Activated B cell treated with CpG ODN at 0.5 μM for 24 hours (primary cell): ENCODE measurements at regions of chr3 and their contacts with region 1.

Region 1: DNA sequence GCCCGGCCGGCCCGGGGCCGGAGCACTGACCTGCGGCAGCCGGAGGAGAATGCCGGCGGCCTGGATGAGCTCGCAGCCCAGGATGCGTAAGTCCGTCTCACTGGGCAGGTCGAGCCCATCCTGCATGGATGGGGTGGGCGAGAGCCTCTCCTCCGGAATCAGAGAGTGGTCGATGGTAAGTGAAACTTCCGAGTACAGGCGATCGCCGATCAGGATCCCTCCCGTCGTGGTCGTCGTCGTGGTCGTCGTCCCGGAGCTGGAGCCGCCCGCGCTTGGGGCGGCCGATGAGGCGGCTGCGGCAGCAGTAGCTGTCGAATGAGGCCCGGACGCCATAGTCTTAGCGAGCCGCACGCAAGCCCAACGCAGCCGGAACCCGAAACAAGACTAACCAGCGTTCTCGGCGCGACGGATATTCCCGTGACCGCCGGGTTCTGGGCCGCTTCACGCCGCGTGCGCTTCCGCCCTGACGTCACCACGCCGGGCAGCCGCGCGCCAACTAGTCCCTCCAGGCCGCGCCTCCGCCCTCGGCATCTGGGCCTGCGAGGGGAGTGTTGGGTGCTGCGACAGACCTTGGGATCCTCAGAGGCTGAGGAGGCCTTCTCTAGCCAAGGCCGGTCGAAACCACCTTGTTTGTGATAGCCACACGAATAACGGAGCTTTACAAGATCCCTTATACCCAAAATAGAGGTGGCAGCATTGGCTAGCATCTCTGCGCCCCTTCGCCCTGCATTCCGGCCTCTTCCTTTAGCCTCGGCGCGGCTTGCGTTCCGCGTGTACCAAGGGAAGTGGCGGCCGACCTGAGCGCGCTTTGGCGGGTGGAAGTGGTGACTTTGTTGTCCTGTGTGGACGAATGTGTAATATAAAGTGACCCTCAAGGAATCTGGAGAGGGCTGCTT is at the start of gene CCNL1:
- DNase-seq: peak; percentile 96
- ATAC-seq: peak; percentile 78
- H3K4me3 Mint-ChIP-seq: peak within 1 kb of the TSS; percentile 99
- H3K27ac Mint-ChIP-seq: peak within 1 kb of the TSS; percentile 98
- H3K4me1 Mint-ChIP-seq: peaks cover 59% of the 10 kb centered on the region
- H3K27me3 Mint-ChIP-seq: no peaks in the 10 kb centered on the region
- CTCF ChIP-seq: no peak
- total RNA-seq, gene CCNL1: 184 and 222 TPM in 2 replicates

Region 2: DNA sequence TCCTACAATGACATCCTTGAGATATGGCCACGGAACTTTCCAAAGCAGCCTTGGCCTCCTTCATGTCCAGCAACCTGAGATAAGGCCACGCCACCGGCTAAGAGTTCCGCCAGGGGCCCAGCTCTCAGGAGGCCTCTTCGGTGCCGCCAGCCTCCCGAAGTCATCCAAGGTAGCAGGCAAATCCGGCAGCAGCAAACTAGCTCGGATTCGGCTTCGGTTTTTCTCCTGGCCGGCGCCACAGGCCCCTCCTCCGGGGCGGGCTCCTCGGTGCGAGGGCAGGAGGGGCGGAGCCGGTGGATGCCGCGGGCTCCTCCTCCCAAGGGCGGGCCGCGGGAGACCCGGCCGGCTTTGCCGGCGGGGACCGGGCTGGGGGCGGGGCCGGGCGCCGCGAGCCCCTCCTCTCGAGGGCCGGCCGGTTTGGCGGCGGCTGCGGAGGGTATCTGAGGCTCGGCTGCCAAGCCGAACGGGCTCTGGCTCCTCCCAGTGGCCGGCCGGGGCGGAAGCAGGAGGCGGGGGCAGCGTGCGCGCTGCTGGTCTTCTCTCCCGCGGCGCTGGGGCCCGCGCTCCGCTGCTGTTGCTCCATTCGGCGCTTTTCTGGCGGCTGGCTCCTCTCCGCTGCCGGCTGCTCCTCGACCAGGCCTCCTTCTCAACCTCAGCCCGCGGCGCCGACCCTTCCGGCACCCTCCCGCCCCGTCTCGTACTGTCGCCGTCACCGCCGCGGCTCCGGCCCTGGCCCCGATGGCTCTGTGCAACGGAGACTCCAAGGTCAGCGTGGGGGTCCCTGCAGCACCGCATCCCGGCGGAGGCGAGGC is 1289.7 kb before region 1 on chr3 and contains the start of gene GMPS:
- CTCF ChIA-PET with region 1: no interaction called
- POLR2A ChIA-PET with region 1: interaction called, 10 read pairs
- intact Hi-C with region 1: loop called (anchors 1 kb)
- DNase-seq: peak; percentile 97
- ATAC-seq: peak; percentile 92
- H3K4me3 Mint-ChIP-seq: peak within 1 kb of the TSS; percentile 92
- H3K27ac Mint-ChIP-seq: peak within 1 kb of the TSS; percentile 93
- H3K4me1 Mint-ChIP-seq: peaks cover 18% of the 10 kb centered on the region
- H3K27me3 Mint-ChIP-seq: no peaks in the 10 kb centered on the region
- CTCF ChIP-seq: no peak
- total RNA-seq, gene GMPS: 42.2 and 45.1 TPM in 2 replicates

Region 3: GRCh38 chr3:156816800-156817645 is 343.0 kb before region 1 on chr3:
- CTCF ChIA-PET with region 1: no interaction called
- POLR2A ChIA-PET with region 1: interaction called, 22 read pairs
- intact Hi-C with region 1: loop called (anchors 1 kb)
- DNase-seq: peak; percentile 93
- ATAC-seq: peak; percentile 83
- H3K4me3 Mint-ChIP-seq: peak overlapping the region; percentile 94
- H3K27ac Mint-ChIP-seq: peak overlapping the region; percentile 99
- H3K4me1 Mint-ChIP-seq: peaks cover 42% of the 10 kb centered on the region
- H3K27me3 Mint-ChIP-seq: no peaks in the 10 kb centered on the region
- CTCF ChIP-seq: no peak

Region 4: GRCh38 chr3:157142315-157142714 is 17.7 kb before region 1 on chr3:
- CTCF ChIA-PET with region 1: interaction called, 6 read pairs
- POLR2A ChIA-PET with region 1: interaction called, 8 read pairs
- intact Hi-C with region 1: loop called (anchors 2 kb)
- DNase-seq: no peak
- ATAC-seq: no peak
- H3K4me3 Mint-ChIP-seq: no peak overlapping the region
- H3K27ac Mint-ChIP-seq: no peak overlapping the region
- H3K4me1 Mint-ChIP-seq: peaks cover 3% of the 10 kb centered on the region
- H3K27me3 Mint-ChIP-seq: no peaks in the 10 kb centered on the region
- CTCF ChIP-seq: no peak

Region 5: DNA sequence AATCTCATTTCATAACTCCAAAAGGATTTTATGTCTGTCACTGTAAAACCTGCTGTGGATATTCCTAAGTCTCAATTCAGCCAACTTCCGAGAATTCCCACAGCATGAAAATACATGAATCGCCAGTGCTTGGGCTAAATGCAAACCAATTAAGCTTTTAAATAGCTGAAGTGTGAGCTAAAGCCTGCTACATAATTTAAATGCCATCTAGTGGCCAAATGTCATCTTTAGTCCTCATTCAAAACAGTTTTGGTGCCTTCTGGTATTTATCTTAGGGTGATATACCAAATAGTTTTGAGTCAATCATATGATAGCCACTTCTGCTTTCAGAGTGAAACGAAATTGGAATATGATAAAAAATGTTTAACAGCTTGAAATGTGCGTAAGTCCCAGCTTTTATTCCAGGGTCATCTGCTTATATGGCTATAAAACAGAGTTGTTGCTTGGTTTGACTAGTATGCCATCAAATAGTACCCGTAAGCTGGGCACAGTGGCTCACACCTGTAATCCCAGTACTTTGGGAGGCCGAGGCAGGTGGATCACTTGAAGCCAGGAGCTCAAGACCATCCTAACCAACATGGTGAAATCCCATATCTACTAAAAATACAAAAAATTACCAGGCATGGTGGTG is 41.8 kb after region 1 on chr3:
- CTCF ChIA-PET with region 1: interaction called, 11 read pairs
- POLR2A ChIA-PET with region 1: interaction called, 17 read pairs
- intact Hi-C with region 1: loop called (anchors 1 kb)
- DNase-seq: no peak
- ATAC-seq: peak; percentile 50
- H3K4me3 Mint-ChIP-seq: no peak overlapping the region
- H3K27ac Mint-ChIP-seq: no peak overlapping the region
- H3K4me1 Mint-ChIP-seq: peaks cover 4% of the 10 kb centered on the region
- H3K27me3 Mint-ChIP-seq: no peaks in the 10 kb centered on the region
- CTCF ChIP-seq: peak; percentile 47